ENCODE measurements at regions of chr1 and their contacts with region 1.

Region 1: DNA sequence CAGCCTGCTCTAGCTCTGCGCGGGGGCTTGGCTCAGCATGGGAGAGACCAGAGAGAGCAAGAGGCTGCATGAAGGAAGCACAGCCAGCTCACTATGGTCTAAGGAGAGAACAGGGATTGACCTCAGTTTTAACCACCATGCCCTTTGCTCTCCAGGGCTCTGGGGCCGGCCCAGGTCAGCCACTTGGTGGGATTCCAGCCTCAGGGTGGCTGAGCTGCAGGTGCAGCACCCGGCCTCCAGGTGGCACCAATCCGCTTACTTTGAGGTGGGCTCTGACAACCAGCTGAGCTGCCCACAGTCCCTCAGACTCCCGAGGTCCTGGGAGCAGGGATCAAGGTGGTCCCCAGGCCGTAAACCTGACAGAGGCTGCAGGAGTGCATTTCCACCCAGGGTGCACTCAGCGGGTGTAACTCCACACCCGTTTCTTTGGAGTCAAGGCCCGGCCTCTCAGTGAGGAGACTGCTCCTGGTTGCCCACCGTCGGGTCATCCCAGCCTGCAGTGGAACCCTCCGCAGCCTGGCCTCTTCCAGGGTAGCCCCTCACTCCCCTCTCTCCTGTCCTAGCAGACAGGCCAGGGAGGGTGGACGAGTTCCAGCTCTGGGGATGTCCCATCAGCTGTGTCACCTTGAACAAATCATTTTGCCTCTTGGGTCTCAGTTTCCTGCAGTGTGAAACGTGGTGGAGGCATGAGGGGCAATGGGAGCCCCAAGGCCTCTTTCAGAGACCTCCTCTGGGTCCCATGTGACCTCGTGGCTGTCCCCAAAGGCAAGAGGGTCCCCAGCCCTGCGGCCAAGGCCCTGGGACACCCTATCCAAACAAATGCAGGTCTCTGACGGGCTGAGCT is 607 bp upstream of the LGR6 start:
- DNase-seq: peak; percentile 70
- H3K4me3 Mint-ChIP-seq: no peak overlapping the region
- H3K27ac Mint-ChIP-seq: no peak overlapping the region
- H3K4me1 Mint-ChIP-seq: peaks cover 3% of the 10 kb centered on the region
- H3K27me3 Mint-ChIP-seq: peaks cover 64% of the 10 kb centered on the region

Region 2: GRCh38 chr1:202063100-202063499 is 129.9 kb before region 1 on chr1:
- CTCF ChIA-PET with region 1: no interaction called
- DNase-seq: no peak
- H3K4me3 Mint-ChIP-seq: no peak overlapping the region
- H3K27ac Mint-ChIP-seq: no peak overlapping the region
- H3K4me1 Mint-ChIP-seq: no peaks in the 10 kb centered on the region
- H3K27me3 Mint-ChIP-seq: peaks cover 13% of the 10 kb centered on the region

Region 3: DNA sequence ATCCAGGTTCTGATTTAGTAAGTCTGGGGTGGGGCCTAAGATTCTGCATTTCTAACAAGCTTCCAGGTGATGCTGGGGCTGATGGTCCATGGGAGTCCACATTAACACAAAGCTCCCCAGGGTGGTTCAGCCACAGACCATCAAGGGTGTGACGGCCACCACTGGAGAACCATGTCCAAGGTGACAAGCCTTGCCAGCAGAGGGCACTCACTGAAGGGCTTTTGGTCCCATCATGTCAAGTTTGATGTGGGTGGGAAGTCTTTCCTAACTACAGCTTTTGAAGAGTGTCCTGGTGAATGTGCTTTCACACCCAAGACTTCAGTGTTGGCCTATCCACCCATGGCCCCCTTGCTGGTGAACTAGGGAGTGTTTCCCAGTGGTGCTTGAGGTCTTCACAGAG is 81.6 kb after region 1 on chr1:
- CTCF ChIA-PET with region 1: interaction called, 12 read pairs
- DNase-seq: peak; percentile 66
- H3K4me3 Mint-ChIP-seq: no peak overlapping the region
- H3K27ac Mint-ChIP-seq: no peak overlapping the region
- H3K4me1 Mint-ChIP-seq: no peaks in the 10 kb centered on the region
- H3K27me3 Mint-ChIP-seq: peaks cover 34% of the 10 kb centered on the region

Region 4: GRCh38 chr1:202304375-202304774 is 111.4 kb after region 1 on chr1:
- CTCF ChIA-PET with region 1: interaction called, 16 read pairs
- DNase-seq: no peak
- H3K4me3 Mint-ChIP-seq: no peak overlapping the region
- H3K27ac Mint-ChIP-seq: no peak overlapping the region
- H3K4me1 Mint-ChIP-seq: peaks cover 6% of the 10 kb centered on the region
- H3K27me3 Mint-ChIP-seq: peaks cover 47% of the 10 kb centered on the region